Mammary epithelial cell (primary cell): ENCODE measurements at regions of chr12 and their contacts with region 1.

Region 1: DNA sequence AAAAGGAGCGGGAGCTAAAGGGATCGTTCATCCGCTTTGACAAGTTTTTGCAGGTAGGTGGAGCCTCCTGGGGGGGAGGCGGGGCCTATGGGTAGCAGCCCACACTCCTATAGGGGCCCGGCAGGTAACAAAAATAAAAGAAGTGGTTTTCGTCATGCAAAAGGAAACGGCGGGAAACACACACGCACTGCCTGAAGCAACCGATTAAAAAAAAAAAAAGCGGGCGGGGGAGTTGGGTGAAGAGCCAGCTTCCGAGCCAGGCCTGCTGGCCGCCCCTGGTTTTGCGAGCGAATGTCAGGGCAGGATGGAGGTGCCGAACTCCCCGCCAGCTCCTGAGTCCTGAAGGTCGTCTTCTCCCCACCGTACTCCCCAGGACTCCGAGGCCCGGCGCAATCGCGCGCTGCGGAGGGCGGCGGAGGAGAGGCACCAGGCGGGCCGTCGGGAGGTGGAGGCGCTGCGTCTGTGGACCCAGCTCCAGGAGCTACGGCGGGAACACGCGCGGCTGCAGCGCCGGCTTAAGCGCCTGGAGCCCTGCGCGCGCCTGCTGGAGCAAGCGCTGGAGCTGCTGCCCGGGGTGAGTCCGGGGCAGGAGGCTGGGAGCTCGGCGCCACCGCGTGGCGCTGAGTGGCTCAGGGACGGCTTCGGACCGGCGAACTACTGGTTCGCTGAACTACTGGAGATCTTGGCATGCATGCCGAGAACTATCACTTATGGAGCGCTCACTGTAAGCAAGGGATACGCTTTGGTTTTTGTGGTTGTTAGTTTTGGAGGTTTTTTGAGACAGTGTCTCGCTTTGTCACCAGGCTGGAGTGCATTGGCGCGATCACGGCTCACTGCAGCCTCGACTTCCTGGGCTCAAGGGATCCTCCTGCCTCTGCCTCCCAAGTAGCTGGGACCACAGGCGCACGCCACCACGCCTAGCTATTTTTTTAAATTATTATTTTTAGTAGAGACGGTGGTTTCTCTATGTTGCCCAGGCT is 3.6 kb downstream of the CFAP73 start:
- DNase-seq: peak; percentile 79
- H3K4me3 ChIP-seq: peak overlapping the region; percentile 46 to 60 (median 46)
- H3K27ac ChIP-seq: no peak overlapping the region
- H3K4me1 ChIP-seq: peaks cover 25% of the 10 kb centered on the region
- H3K27me3 ChIP-seq: no peaks in the 10 kb centered on the region
- CTCF ChIP-seq: peak; percentile 3 to 69

Region 2: GRCh38 chr12:113048716-113049127 is 104.4 kb before region 1 on chr12:
- CTCF ChIA-PET with region 1: no interaction called
- dilution Hi-C with region 1: no loop called
- in situ Hi-C with region 1: loop called in 1 of 2 experiments (anchors 10 kb)
- intact Hi-C with region 1: loop called (anchors 1 kb)
- DNase-seq: peak; percentile 32
- H3K4me3 ChIP-seq: no peak overlapping the region
- H3K27ac ChIP-seq: no peak overlapping the region
- H3K4me1 ChIP-seq: no peaks in the 10 kb centered on the region
- H3K27me3 ChIP-seq: no peaks in the 10 kb centered on the region
- CTCF ChIP-seq: peak; percentile 71 to 84

Region 3: GRCh38 chr12:113092607-113093408 is 60.3 kb before region 1 on chr12:
- CTCF ChIA-PET with region 1: no interaction called
- dilution Hi-C with region 1: loop called (anchors 5 kb)
- in situ Hi-C with region 1: no loop called
- intact Hi-C with region 1: loop called (anchors 1 kb)
- DNase-seq: no peak
- H3K4me3 ChIP-seq: no peak overlapping the region
- H3K27ac ChIP-seq: no peak overlapping the region
- H3K4me1 ChIP-seq: peaks cover 5% of the 10 kb centered on the region
- H3K27me3 ChIP-seq: peaks cover 2% of the 10 kb centered on the region
- CTCF ChIP-seq: peak in 1 of 2 donors; percentile 44